Esophagus muscularis mucosa (tissue), 4 donors: ENCODE measurements at regions of chr12 and their contacts with region 1.

Region 1: DNA sequence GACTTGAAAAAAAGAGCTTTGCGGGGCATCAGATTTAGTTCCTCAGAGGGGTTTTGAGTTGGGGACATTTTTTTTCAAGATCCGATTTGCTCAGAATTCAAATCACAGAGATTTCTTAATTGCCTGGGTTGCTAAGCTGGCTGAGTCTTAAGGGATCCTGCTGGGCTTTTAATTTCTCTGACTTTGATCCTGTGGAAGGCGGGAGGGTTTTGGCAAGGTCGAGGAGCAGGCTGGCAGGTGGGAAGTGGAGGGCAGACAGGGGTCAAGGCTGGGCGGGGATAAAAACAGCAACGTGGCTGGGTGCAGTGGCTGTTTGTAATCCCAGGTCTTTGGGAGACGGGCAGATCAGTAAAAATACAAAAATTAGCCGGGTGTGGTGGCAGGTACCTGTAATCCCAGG is 33.5 kb upstream of the CCDC63 start:
- DNase-seq: no peak
- H3K4me3 ChIP-seq: no peak overlapping the region
- H3K27ac ChIP-seq: no peak overlapping the region
- H3K4me1 ChIP-seq: no peaks in the 10 kb centered on the region
- H3K27me3 ChIP-seq: peaks cover 0 to 11% (median 0%) of the 10 kb centered on the region in 4 donors
- CTCF ChIP-seq: no peak
- EP300 ChIP-seq: no peak
- POLR2A ChIP-seq: no peak

Region 2: GRCh38 chr12:110750784-110751461 is 62.4 kb before region 1 on chr12:
- intact Hi-C with region 1: loop called (anchors 10 kb)
- DNase-seq: no peak
- H3K4me3 ChIP-seq: no peak overlapping the region
- H3K27ac ChIP-seq: peak overlapping the region; percentile 23 to 66 (median 38)
- H3K4me1 ChIP-seq: peaks cover 0 to 9% (median 7%) of the 10 kb centered on the region in 4 donors
- H3K27me3 ChIP-seq: no peaks in the 10 kb centered on the region
- CTCF ChIP-seq: no peak
- EP300 ChIP-seq: no peak
- POLR2A ChIP-seq: no peak